GM12878 (cell line): ENCODE measurements at regions of chr14 and their contacts with region 1.

Region 1: DNA sequence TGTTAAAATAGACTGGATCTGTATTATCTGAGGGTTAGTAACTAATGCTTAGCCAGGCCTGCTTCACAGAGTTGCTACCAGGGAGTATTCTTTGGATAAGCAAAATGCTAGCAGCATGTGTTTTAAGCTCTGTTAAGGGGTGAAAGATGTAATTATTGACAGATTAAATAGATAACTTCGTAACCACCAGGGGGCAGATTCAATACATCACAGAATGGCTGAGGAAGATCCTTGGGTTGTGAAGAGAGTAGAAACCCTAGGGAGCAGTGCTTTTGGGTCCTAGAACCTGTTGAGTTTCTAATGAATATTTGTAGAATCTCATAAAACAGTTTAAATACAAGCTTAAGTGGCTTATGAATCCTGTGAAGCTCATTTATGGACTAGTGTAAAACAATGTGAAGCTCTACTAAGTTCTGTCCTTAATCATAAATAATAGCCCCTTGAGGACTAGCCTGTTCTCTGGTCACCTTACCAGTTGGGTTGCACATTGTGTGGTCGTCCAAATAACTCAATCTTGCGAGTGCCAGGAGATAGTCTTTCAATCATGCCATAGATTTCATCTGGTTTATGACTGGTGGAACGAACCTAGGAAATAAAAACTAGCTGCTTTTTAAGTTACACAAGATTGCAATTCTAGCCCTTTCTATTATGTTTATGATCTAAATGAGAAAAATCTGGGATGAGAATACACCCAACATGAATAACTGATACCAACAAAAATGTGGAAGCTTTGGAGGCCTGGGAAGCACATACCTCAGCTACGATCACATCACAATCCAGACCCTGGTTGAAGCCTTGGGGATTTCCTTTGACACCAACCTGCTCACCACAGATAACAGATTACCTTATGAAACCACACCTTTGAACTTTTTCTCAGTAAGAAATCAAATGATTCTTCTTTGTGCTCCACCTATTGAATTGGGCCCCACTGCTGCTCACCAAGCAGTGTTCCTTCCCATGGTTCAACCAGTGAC is 12.3 kb downstream of the METTL3 start:
- DNase-seq: no peak
- ATAC-seq: peak; percentile 89
- H3K4me3 ChIP-seq: no peak overlapping the region
- H3K27ac ChIP-seq: 0 out of 2 replicates have a peak overlapping the region, but pooled peaks have one; percentile 2
- H3K4me1 ChIP-seq: no peaks in the 10 kb centered on the region
- H3K27me3 ChIP-seq: no peaks in the 10 kb centered on the region
- CTCF ChIP-seq: peak; percentile 34 to 61 (median 42)
- EP300 ChIP-seq: peak; percentile 15; a peak in 1 of 4 replicates
- POLR2A ChIP-seq: no peak
- RAD21 ChIP-seq: peak; percentile 74

Region 2: GRCh38 chr14:20606190-20606901 is 892.5 kb before region 1 on chr14:
- CTCF ChIA-PET with region 1: no interaction called
- POLR2A ChIA-PET with region 1: no interaction called
- RAD21 ChIA-PET with region 1: no interaction called
- SMC1A ChIA-PET with region 1: no interaction called
- in situ Hi-C with region 1: no loop called
- intact Hi-C with region 1: no loop called
- DNase-seq: no peak
- ATAC-seq: no peak
- H3K4me3 ChIP-seq: no peak overlapping the region
- H3K27ac ChIP-seq: no peak overlapping the region
- H3K4me1 ChIP-seq: peaks cover 15% of the 10 kb centered on the region
- H3K27me3 ChIP-seq: no peaks in the 10 kb centered on the region
- CTCF ChIP-seq: peak; percentile 46 to 58 (median 47); a peak in 4 of 6 replicates
- EP300 ChIP-seq: no peak
- POLR2A ChIP-seq: no peak
- RAD21 ChIP-seq: peak; percentile 65

Region 3: GRCh38 chr14:21300892-21301291 is 197.9 kb before region 1 on chr14:
- CTCF ChIA-PET with region 1: no interaction called
- POLR2A ChIA-PET with region 1: no interaction called
- RAD21 ChIA-PET with region 1: no interaction called
- SMC1A ChIA-PET with region 1: no interaction called
- in situ Hi-C with region 1: no loop called
- intact Hi-C with region 1: no loop called
- DNase-seq: no peak
- ATAC-seq: peak; percentile 77
- H3K4me3 ChIP-seq: peak overlapping the region; percentile 43; the same call in 1 of the 2 replicates
- H3K27ac ChIP-seq: no peak overlapping the region
- H3K4me1 ChIP-seq: peaks cover 7% of the 10 kb centered on the region
- H3K27me3 ChIP-seq: no peaks in the 10 kb centered on the region; a peak in 1 of 4 replicates
- CTCF ChIP-seq: 0 out of 6 replicates have a peak, but pooled peaks of 2 of the 3 experiments have one; percentile 1 to 8
- EP300 ChIP-seq: no peak
- POLR2A ChIP-seq: no peak
- RAD21 ChIP-seq: no peak

Region 4: DNA sequence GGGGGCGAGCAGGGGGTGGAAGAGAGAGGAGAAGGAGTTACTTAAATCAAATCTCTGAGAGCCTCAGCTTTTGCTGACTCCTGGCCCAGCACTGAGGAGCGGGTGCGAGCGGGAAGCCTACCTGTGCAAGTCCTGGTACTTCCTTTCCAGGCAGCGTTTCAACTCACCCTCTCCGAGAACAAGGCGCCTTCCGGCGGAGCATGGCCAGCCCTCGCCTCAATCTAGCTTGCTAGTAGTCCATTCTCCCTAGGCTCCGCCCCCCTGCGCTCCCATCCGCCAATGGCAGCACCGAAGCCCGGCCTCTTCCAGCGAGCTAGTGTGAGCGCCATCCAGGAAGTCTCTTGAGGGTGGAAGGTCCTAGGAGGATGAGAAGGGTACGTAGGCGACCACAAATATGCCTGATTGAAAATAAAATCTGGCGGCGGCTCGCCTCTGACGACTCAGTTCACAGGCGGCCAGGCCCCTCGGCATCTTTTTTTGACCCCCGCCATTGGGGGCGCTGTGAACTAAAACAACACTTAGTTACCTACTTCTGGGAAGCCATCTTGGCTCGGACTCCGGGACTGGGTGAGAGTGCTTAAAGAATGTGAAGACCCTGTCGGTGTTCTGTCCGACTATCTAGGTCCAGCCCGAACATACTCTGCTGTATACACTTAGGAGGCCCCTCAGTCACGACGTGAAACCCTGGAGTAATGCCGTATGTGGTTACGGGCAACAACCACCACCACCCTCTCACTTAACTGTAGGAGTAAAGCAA is 42.8 kb before region 1 on chr14 and contains the start of gene CHD8:
- CTCF ChIA-PET with region 1: interaction called, 26 read pairs
- POLR2A ChIA-PET with region 1: interaction called, 3 read pairs
- RAD21 ChIA-PET with region 1: interaction called, 20 read pairs
- SMC1A ChIA-PET with region 1: interaction called, 12 read pairs
- in situ Hi-C with region 1: no loop called
- intact Hi-C with region 1: no loop called
- DNase-seq: peak; percentile 99
- ATAC-seq: peak; percentile 98
- H3K4me3 ChIP-seq: peak within 1 kb of the TSS; percentile 97
- H3K27ac ChIP-seq: peak within 1 kb of the TSS; percentile 94
- H3K4me1 ChIP-seq: peaks cover 7% of the 10 kb centered on the region
- H3K27me3 ChIP-seq: no peaks in the 10 kb centered on the region
- CTCF ChIP-seq: peak; percentile 60 to 79 (median 79)
- EP300 ChIP-seq: 0 out of 4 replicates have a peak, but pooled peaks of 1 of the 2 experiments have one; percentile 8
- POLR2A ChIP-seq: peak; percentile 94
- RAD21 ChIP-seq: peak; percentile 45
- polyA plus RNA-seq, gene CHD8: 20.2 to 28.2 TPM

Region 5: DNA sequence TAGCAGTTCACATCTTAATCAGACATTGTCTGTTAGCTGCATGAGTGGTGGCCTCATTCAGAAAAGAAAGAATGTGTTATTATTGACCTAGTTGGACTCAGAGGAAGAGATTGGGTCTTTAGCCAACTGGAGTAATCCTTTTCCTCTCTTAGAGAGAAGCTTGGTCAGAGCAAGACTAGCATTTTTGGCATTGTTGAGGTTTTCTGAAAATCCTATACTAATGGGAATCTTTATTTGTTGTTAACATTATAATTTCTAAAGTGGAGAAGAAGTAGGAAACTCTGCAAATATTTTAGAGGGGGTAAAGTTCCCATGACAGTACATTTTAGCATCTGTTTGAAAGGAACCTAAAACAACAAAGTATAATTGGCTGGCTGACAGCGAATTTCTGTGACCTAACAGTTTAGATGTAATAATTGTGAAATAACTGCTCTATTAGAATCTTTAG is 12.2 kb before region 1 on chr14:
- CTCF ChIA-PET with region 1: interaction called, 15 read pairs
- POLR2A ChIA-PET with region 1: interaction called, 5 read pairs
- RAD21 ChIA-PET with region 1: interaction called, 7 read pairs
- SMC1A ChIA-PET with region 1: interaction called, 8 read pairs
- in situ Hi-C with region 1: no loop called
- intact Hi-C with region 1: no loop called
- DNase-seq: no peak
- ATAC-seq: no peak
- H3K4me3 ChIP-seq: no peak overlapping the region
- H3K27ac ChIP-seq: no peak overlapping the region
- H3K4me1 ChIP-seq: no peaks in the 10 kb centered on the region
- H3K27me3 ChIP-seq: no peaks in the 10 kb centered on the region
- CTCF ChIP-seq: no peak
- EP300 ChIP-seq: no peak
- POLR2A ChIP-seq: no peak
- RAD21 ChIP-seq: no peak

Region 6: DNA sequence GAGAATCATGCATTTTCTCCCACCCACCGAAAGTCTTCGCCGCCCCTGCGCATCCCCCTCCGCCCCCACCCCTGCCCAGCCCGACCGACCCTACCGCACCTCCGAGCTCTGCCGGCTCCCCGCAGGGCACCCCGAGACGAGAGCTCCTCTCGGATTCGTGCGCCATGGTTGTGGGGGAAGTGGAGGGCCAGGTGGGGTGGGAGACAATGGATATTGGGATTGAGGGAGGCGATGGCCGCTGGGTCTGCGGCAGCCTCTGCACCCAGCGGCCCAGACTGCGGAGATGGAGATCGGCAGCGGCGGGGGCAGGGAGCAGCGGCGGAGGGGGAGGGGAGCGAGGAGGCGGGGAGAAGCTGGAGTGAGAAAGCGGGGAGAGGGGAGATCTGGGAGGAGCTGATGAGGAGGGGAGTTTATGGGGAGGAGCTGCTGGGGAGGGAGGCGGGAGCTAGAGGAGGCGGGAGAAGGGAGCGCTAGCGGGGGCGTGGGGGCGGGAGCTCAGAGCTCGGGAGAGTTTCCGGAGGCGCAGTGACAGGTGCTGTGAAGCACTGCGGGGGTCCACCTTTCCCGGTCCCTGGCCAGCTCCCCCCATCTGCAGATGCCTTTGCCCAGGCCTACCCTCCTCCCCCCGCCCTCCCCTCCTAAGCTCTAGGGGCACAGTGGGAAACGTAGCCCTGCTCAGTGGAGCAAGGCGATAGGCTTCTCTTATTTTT is 27.3 kb after region 1 on chr14 and contains the start of gene SALL2:
- CTCF ChIA-PET with region 1: interaction called, 29 read pairs
- POLR2A ChIA-PET with region 1: interaction called, 12 read pairs
- RAD21 ChIA-PET with region 1: interaction called, 52 read pairs
- SMC1A ChIA-PET with region 1: interaction called, 29 read pairs
- in situ Hi-C with region 1: no loop called
- intact Hi-C with region 1: no loop called
- DNase-seq: peak; percentile 21
- ATAC-seq: peak; percentile 86
- H3K4me3 ChIP-seq: peak within 1 kb of the TSS; percentile 73
- H3K27ac ChIP-seq: peak within 1 kb of the TSS; percentile 31; the same call in 1 of the 2 replicates
- H3K4me1 ChIP-seq: peaks cover 12% of the 10 kb centered on the region
- H3K27me3 ChIP-seq: no peaks in the 10 kb centered on the region
- CTCF ChIP-seq: no peak
- EP300 ChIP-seq: no peak
- POLR2A ChIP-seq: peak; percentile 53
- RAD21 ChIP-seq: no peak
- polyA plus RNA-seq, gene SALL2: 1.9 to 2.3 TPM

Region 7: DNA sequence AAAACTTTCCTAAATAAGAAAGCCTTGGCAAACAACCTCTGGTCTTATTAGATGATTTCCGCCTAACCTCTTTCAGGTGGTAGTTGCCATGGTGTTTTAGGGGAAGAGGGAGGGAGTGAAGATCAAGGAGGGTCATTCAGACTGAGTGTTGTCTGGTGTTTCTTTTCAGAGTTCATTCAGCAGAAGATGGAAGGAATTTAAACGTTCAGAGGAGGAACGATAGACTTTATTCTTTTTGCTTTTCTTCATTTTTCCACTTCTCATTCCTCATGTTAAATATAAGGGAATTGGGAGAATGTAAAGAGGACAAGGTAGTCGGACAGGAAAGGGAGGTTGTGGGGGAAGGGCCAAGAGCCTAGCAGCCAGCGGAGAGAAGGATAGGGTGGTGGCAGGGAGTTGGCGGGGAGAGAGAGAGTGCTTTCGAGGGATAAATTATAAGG is 44.7 kb after region 1 on chr14:
- CTCF ChIA-PET with region 1: interaction called, 16 read pairs
- POLR2A ChIA-PET with region 1: no interaction called
- RAD21 ChIA-PET with region 1: interaction called, 4 read pairs
- SMC1A ChIA-PET with region 1: interaction called, 11 read pairs
- in situ Hi-C with region 1: no loop called
- intact Hi-C with region 1: no loop called
- DNase-seq: no peak
- ATAC-seq: no peak
- H3K4me3 ChIP-seq: no peak overlapping the region
- H3K27ac ChIP-seq: no peak overlapping the region
- H3K4me1 ChIP-seq: no peaks in the 10 kb centered on the region
- H3K27me3 ChIP-seq: peaks cover 0 to under 1% of the 10 kb centered on the region in 2 experiments; a peak in 2 of 4 replicates
- CTCF ChIP-seq: no peak
- EP300 ChIP-seq: no peak
- POLR2A ChIP-seq: no peak
- RAD21 ChIP-seq: no peak